Left ventricle myocardium inferior (tissue), 1 donor: ENCODE measurements at regions of chr5 and their contacts with region 1.

Region 1: DNA sequence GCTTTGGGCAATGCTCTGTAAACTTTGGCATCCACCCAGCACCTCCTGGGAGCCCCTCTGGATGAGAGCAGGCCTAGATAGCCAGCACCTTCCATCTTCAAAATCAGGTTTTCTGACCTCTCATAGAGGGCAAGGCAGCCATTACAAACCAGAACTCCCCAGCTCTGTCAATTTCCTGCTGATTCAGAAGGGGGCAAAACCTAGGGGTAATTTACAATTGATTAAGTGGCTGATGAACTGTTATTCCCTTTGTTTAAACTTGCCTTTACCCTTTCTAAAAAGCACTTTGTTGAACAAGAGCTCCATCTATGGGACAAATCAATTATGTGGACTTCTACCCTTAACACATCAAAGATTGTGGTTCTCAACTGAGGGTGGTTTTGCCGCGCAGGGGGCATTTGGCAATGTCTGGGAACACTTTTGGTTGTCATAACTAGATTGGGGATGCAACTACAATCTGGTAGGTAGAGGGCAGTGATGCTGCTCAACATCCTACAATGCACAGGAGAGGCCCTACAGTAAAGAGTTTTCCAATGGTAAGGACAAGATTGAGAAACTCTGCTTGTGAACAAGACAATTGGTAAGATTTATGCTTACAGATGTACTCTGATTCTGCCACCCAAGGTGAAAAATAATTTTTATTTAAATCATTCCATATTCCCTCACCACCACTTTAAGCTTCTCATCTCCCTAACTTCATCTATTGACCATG is 184.1 kb downstream of the MARCHF11 start:
- DNase-seq: no peak
- H3K4me3 ChIP-seq: no peak overlapping the region
- H3K27ac ChIP-seq: no peak overlapping the region
- H3K4me1 ChIP-seq: no peaks in the 10 kb centered on the region
- H3K27me3 ChIP-seq: no peaks in the 10 kb centered on the region
- CTCF ChIP-seq: peak; percentile 69

Region 2: GRCh38 chr5:15463231-15463980 is 532.1 kb before region 1 on chr5:
- intact Hi-C with region 1: loop called (anchors 10 kb)
- DNase-seq: no peak
- H3K4me3 ChIP-seq: no peak overlapping the region
- H3K27ac ChIP-seq: no peak overlapping the region
- H3K4me1 ChIP-seq: no peaks in the 10 kb centered on the region
- H3K27me3 ChIP-seq: no peaks in the 10 kb centered on the region
- CTCF ChIP-seq: peak; percentile 60